ENCODE measurements at regions of chr9 and their contacts with region 1.

Region 1: DNA sequence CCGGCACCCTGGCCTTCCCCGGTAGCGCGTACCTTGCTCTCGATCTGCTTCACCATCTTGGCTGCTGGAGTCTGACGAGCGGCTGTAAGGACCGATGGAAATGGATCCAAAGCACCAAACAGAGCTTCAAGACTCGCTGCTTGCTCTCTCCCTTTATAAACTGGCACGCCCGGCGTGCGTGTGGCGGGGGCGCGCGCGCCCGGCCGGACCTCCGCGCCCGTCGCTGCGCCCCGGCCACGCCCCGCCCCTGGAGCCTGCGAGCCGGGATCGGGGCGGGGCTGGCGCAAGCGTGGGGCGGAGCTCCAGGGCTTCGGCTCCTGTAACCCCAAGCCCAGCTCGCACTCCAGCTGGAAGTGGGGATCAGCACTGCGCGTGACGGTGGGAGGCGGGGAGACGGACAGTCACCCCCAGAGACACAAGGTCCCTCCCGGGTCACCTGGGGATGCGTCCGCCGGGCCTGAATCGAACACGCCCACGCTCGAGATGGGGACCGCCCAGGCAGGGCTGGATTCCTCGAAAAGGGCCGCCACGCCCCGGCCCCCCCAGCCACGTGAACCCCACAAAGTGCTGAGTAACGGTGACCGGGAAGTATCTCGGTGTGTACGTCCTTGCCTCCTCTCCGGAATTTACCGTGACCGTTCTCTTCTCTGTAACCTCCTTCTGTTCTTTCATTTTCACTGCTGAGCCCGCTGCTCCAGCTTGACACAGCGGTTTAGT is at the start of gene TXN:
- DNase-seq: peak; percentile 82
- H3K4me3 Mint-ChIP-seq: peak within 1 kb of the TSS; percentile 95
- H3K27ac Mint-ChIP-seq: peak within 1 kb of the TSS; percentile 99
- H3K4me1 Mint-ChIP-seq: peaks cover 49% of the 10 kb centered on the region
- H3K27me3 Mint-ChIP-seq: no peaks in the 10 kb centered on the region
- total RNA-seq, gene TXN: 539 and 551 TPM in 2 replicates

Region 2: GRCh38 chr9:109887079-109887478 is 369.5 kb before region 1 on chr9:
- intact Hi-C with region 1: loop called (anchors 2 kb)
- DNase-seq: no peak
- H3K4me3 Mint-ChIP-seq: no peak overlapping the region
- H3K27ac Mint-ChIP-seq: peak overlapping the region; percentile 89
- H3K4me1 Mint-ChIP-seq: peaks cover 76% of the 10 kb centered on the region
- H3K27me3 Mint-ChIP-seq: no peaks in the 10 kb centered on the region

Region 3: DNA sequence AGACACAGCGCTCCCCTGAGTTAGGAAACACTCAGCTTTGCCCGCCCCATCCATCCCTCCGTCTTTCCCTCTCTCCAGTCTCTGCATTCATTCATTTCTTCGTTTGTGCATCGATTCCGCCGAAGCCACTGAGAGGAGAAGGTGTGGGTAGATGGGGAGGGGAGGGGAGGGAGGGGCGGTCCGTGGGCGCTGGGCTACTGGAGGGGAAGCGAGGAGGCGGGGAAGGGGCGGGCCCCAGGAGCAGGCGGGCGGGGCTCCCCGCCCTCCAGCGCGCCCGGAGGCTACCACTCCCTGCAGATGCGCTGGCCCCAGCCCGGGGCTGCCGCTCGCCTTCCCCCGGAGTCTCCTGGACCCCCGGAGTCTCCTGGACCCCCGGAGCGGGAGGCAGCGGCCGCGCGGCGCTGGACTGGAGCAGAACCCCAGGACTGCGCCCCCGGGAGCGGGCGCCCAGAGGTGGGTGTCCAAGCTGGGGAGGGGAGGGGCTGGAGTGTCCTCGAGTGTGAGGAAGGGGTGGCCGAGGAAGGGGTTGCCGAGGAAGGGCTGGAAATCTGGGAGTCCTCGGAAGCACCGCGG is 208.0 kb before region 1 on chr9:
- intact Hi-C with region 1: loop called (anchors 1 kb)
- DNase-seq: peak; percentile 85
- H3K4me3 Mint-ChIP-seq: peak overlapping the region; percentile 94
- H3K27ac Mint-ChIP-seq: peak overlapping the region; percentile 94
- H3K4me1 Mint-ChIP-seq: peaks cover 42% of the 10 kb centered on the region
- H3K27me3 Mint-ChIP-seq: no peaks in the 10 kb centered on the region

Region 4: DNA sequence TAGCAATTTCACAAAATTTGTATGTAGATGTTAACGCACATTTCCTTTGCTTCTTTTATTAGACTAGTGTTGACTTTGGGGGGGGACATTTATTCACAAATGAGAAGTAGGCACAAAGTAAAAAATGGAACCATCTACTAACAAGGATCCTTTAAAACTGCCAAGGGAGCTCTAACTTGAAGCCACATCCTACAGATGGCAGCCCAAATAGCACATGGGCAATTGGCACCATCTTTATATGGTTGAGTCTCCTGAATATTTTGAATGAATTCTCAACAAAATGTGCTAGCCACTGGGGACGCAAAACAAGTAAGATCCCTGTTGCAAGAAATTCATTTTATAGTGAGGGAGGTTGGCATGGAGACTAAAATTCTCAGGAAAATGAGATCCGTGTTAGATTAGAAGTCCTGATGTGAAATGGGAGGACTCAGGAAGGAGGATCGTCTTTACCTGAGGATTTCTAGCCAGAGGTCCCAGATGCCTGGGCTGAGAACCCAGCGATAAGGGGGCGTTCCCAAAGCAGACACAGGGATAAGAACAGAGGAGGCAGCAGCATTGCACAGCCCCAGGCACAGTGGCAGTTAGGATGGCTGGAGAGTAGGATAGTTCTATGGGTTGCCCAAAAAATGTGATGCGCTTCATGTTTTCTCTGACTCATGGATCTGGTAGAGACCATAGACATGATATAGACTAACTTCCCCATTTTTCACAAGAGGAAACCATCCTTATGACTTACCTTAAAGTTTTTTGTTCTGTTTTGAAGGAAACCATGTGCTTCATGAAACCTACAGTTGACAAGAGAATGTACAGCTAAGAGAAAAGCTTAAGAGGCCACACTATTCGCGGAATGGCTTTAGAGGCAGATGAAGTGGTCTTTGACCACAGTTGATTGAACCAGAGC is 85.9 kb before region 1 on chr9:
- intact Hi-C with region 1: no loop called
- DNase-seq: no peak
- H3K4me3 Mint-ChIP-seq: no peak overlapping the region
- H3K27ac Mint-ChIP-seq: no peak overlapping the region
- H3K4me1 Mint-ChIP-seq: peaks cover 49% of the 10 kb centered on the region
- H3K27me3 Mint-ChIP-seq: no peaks in the 10 kb centered on the region

Region 5: DNA sequence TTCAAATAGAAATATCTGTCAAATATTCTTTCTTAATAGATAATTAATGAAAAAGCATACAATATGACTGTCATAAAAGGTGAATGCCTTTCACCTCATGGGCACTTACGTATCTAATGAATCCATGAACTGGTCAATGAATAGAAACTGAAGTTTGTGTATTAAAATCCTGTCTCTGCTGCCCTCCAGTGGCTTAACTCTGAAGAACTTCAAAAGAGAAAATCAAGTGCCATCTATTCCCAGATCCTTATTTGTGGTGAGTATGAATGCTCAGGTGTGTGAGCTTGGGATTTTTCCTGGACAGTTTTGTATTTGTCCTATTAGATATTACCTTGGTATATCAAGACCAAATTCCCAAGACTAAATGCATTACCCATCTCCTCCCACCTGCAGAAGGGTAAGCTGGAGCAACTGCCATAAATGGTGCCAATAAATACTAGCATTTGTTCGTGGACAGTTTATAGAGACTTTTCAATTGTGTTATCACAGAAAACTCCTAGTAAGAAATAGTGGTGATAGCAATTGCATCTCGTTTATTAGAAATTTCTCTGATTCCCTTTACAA is 367.0 kb after region 1 on chr9:
- intact Hi-C with region 1: loop called (anchors 1 kb)
- DNase-seq: no peak
- H3K4me3 Mint-ChIP-seq: no peak overlapping the region
- H3K27ac Mint-ChIP-seq: no peak overlapping the region
- H3K4me1 Mint-ChIP-seq: peaks cover 10% of the 10 kb centered on the region
- H3K27me3 Mint-ChIP-seq: peaks cover 7% of the 10 kb centered on the region

Region 6: GRCh38 chr9:111631071-111631971 is 1374.8 kb after region 1 on chr9 and contains the start of gene DNAJC25:
- intact Hi-C with region 1: loop called (anchors 10 kb)
- DNase-seq: peak; percentile 97
- H3K4me3 Mint-ChIP-seq: peak within 1 kb of the TSS; percentile 93
- H3K27ac Mint-ChIP-seq: peak within 1 kb of the TSS; percentile 80
- H3K4me1 Mint-ChIP-seq: peaks cover 45% of the 10 kb centered on the region
- H3K27me3 Mint-ChIP-seq: no peaks in the 10 kb centered on the region
- total RNA-seq, gene DNAJC25: 7.3 and 7.4 TPM in 2 replicates

Measured in activated T-helper 2 cell treated with anti-CD3 and anti-CD28 coated beads, Interferon-gamma antibody, Interleukin-2, Interleukin-4, amounts not matched to agents 10 μg/mL and 5 μg/mL and 100 μg/mL, durations not matched to agents 14 hours and 24 hours and 36 hours (primary cell).